ENCODE measurements at regions of chr14 and their contacts with region 1.

Region 1: DNA sequence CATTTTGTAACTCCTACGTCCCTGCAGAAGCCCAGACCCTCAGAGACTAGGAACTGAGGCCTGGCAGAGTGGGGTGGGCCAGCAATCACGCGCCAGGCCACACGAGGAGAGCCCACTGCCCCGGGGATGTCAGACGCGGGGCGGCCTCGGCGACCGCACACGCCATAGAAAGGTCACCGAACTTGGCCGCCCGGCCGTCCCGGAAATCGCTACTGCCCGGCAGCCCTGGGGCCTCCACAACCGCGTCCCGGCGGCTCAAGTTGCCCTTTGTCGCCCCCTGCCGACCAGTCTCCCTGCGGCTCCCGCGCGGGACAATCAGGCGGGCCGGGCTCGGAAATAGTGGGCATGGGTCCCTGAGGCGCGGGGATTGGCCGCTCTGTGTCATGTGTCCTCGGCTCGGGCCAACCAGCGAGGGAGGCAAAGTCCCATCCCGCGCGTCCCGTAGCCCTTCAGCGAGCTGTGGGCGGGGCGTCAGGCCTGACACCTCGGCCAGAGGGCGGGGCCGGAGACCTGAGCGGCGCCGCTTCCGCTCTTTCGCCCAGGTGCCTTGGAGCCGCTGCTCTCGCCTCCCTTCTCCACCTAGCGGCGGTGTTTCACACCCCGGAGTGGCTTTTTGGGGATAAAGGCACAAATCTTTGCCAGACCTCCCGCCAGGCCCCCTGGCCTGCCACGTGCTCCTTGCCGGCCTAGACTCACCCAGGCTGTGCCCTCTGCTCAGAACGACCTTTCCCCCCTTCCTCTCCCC is 33.4 kb upstream of the DEGS2 start:
- DNase-seq: peak; percentile 100
- CTCF ChIP-seq: peak; percentile 97

Region 2: DNA sequence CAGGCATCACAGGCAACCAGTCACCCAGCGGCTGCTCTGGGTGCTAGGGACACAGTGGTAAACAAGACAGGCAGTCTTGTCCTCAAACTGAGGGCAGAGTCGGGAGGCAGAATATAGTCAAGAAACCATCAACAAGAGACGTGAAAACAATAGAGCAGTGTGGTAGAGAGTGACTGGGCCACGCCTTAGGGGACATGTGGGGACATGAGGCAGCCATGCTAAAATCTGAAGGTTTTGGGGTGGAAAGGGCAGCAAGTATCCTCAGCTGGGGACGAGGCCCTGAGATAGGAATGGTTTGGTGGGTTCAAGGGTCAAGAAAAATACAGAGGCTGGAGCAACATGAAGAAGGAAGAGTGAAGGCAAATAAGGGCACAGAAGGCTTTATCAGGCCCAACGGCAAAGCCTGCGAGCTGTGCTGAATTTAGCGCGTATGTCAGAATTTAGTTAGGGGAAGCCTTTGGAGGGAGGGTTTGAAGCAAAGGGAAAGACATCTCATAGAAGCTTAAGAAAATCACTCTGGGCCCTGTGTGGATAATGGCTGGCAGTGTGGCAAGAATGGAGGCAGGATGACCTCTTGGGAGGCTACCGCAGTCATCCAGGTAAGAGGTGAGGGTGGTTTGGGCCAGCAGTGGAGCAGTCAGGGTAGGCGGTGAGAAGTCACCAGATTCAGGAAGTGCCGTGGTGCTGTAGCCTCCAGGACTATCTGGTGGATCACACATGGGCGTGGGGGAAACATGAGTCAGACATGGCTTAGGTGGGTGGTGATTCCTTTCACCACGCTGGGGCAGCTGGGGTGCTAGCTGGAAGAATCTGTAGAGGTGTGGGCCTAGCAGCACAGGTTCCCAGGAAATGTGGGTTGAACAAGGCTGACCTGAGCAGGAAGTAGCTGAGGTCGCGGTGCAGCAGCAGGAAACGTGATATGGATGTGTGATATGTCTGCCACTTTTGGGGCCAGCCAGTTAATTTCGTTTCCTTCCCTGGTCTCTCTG is 124.6 kb before region 1 on chr14:
- CTCF ChIA-PET with region 1: interaction called, 14 read pairs
- POLR2A ChIA-PET with region 1: no interaction called
- DNase-seq: peak; percentile 32
- CTCF ChIP-seq: no peak

Region 3: DNA sequence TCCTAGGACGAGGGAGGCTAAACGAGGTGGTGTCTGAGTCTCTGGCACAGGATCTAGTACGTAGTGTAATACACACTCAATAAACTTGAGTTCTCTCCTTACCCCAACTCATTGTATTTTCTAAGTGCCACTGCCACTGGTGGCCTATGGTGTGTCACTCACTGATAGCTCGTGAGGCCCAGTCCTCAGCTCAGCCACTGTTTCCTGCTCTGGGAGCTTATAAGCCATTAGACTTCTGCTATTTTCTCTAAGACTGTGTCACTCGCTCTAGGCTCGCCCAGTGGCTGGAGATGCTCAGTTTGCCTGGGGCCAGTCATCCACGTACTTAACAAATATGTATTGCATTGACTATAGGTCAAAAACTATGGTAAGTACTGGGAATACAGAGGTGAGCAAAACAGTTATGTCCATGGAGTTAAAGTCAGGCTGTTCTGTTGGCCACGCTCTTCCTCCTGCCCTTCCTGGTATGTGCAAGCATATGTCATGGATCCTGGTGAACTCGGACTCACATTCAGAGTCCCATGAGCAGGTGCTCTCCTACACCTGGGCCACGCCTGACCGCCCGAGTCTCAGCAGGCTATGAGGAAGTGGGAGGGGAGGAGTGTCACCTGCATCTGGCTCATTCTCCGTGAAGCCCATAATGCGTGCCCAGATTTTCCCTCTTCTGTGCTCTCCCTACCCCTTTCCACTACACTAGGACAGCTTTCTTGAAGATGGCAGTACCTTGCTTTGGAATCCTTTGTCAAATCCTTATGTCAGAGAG is 75.0 kb before region 1 on chr14:
- CTCF ChIA-PET with region 1: interaction called, 10 read pairs
- POLR2A ChIA-PET with region 1: no interaction called
- DNase-seq: no peak
- CTCF ChIP-seq: no peak

Region 4: DNA sequence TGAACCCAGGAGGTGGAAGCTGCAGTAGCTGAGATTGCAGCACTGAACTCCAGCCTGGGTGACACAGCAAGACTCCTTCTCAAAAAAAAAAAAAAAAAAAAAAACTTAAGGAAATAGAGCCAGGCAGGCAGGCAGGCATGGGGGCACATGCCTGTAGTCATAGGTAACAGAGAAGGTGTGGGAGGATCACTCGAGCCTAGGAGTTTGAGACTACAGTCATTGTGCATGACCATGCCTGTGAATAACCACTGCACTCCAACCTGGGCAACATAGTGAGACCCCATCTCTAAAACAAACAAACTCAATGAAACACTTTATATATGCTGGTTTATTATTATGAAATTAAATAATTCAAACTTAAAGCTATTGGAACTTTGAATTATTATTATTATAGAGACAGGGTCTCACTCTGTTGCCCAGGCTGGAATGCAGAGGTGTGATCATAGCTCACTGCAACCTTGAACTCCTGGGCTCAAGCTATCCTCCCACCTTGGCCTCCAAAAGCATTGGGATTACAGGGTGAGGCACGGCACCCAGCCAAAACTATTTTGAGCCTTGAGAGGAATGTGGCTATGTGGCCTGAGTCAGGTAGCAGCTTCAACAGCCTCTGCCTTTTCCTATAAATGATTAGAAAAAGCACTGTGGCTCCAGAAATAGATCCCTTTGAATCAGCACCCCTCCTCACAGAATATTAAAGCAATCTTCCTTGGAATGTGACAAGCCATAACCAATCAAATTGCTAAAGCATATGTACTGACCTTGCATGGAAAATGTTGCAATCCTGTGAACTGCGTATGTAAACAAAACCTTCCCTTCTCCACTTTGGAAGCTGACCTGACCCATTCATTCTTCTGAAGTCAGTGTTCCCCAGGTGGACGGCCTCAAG is 11.3 kb after region 1 on chr14:
- CTCF ChIA-PET with region 1: interaction called, 55 read pairs
- POLR2A ChIA-PET with region 1: no interaction called
- DNase-seq: no peak
- CTCF ChIP-seq: no peak

Region 5: GRCh38 chr14:100234511-100234910 is 41.7 kb after region 1 on chr14:
- CTCF ChIA-PET with region 1: interaction called, 15 read pairs
- POLR2A ChIA-PET with region 1: no interaction called
- DNase-seq: no peak
- CTCF ChIP-seq: no peak

Measured in GM10248 (cell line).